ENCODE measurements at regions of chr9 and their contacts with region 1.

Region 1: GRCh38 chr9:132789719-132790118 is 88.4 kb downstream of the AK8 start:
- DNase-seq: no peak
- H3K4me3 ChIP-seq: no peak overlapping the region
- H3K27ac ChIP-seq: no peak overlapping the region
- H3K4me1 ChIP-seq: no peaks in the 10 kb centered on the region
- H3K27me3 ChIP-seq: peaks cover 17% of the 10 kb centered on the region
- CTCF ChIP-seq: no peak

Region 2: DNA sequence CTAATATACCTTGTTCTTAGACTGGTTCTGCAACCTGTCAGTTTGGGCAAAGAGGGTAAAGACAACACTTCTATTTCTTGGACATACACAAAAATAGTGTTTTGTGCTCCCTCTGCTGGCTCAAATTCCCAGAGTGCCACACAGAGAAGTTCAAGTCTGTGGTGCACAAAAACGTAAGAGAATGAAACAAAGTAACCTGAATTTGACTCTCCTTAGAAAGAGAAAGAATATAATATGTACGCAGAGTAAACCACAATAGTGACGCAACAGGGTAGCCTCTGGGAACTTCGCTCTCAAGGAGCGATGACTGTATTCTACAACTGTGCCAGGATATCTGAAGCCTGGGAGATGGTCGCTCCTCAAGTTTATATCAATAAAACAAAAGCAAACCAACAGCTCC is 138.5 kb before region 1 on chr9:
- CTCF ChIA-PET with region 1: no interaction called
- POLR2A ChIA-PET with region 1: interaction called, 12 read pairs
- intact Hi-C with region 1: no loop called
- DNase-seq: no peak
- H3K4me3 ChIP-seq: no peak overlapping the region
- H3K27ac ChIP-seq: no peak overlapping the region
- H3K4me1 ChIP-seq: no peaks in the 10 kb centered on the region
- H3K27me3 ChIP-seq: no peaks in the 10 kb centered on the region
- CTCF ChIP-seq: peak; percentile 48

Region 3: DNA sequence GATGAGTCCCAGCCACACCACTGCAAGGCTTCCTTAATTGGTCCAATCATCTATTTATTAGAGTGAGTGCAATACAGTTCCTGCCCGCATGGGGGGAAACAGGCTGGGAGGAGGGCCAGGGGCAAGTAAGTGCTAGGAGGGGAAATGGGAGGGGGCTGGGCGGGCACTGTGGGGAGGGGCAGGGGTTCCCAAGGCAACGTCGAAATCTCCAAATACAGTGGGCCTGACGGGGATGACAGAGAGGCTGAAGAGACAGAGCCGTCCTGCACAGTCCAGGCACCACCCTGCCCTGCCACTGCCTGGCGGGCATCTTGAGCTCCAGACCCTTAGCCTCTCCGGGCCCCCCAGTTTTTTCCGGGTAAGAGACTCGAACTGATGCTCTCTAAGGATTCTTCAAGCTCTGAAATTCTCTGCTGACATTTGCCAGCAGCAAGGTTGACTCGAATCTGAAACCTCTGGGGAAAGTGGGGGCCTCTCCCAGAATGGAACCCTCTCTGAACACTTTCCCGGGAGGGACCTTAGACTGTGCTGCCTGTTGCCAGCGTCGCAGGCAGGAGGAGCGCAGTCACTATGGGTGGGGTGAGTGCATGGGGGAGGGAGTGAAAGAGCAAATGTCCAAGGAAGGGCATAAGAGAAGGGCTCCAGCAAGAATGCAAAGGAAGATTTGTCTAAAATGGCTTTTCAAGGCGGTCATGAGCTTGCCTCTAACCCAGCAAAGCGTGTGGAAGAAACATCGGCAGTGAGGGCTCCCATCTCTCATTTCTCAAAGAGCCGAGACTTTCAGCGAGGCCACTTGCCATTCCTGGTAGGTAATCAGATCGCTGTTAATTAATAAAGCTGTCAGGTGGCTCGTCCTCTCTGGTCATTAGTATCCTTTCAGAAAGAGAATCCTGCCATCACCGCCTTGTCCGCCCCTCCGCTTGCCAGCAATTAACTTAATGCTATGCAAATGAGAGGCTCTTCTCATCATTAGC is 20.5 kb before region 1 on chr9:
- CTCF ChIA-PET with region 1: interaction called, 13 read pairs
- POLR2A ChIA-PET with region 1: no interaction called
- intact Hi-C with region 1: no loop called
- DNase-seq: peak; percentile 74
- H3K4me3 ChIP-seq: peak overlapping the region; percentile 65
- H3K27ac ChIP-seq: peak overlapping the region; percentile 33
- H3K4me1 ChIP-seq: peaks cover 11% of the 10 kb centered on the region
- H3K27me3 ChIP-seq: peaks cover 10% of the 10 kb centered on the region
- CTCF ChIP-seq: peak; percentile 42